Breast epithelium (tissue), 4 donors: ENCODE measurements at regions of chr6 and their contacts with region 1.

Region 1: DNA sequence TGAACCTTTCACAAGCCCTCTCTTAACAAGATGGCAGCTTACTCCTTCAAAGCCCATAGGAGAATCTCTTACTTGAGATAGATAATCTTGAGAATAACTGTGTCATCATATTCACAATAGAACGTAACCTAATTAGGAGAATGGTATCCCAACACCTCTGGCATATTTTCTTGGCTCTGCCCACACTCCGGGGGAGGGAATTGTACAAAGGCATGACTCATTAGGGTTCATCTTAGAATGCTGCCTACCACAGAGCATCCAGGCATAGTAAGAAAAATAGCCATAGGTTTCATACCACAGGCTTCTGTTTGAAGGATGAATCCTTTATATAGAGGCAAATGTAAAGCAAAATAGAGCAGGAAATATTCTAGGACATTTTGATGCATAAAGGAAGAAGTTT is 1100.6 kb upstream of the CITED2 start:
- DNase-seq: peak in 1 of 2 donors; percentile 51
- H3K4me3 ChIP-seq: no peak overlapping the region
- H3K27ac ChIP-seq: no peak overlapping the region
- H3K4me1 ChIP-seq: no peaks in the 10 kb centered on the region
- H3K27me3 ChIP-seq: no peaks in the 10 kb centered on the region
- CTCF ChIP-seq: no peak
- POLR2A ChIP-seq: no peak

Region 2: DNA sequence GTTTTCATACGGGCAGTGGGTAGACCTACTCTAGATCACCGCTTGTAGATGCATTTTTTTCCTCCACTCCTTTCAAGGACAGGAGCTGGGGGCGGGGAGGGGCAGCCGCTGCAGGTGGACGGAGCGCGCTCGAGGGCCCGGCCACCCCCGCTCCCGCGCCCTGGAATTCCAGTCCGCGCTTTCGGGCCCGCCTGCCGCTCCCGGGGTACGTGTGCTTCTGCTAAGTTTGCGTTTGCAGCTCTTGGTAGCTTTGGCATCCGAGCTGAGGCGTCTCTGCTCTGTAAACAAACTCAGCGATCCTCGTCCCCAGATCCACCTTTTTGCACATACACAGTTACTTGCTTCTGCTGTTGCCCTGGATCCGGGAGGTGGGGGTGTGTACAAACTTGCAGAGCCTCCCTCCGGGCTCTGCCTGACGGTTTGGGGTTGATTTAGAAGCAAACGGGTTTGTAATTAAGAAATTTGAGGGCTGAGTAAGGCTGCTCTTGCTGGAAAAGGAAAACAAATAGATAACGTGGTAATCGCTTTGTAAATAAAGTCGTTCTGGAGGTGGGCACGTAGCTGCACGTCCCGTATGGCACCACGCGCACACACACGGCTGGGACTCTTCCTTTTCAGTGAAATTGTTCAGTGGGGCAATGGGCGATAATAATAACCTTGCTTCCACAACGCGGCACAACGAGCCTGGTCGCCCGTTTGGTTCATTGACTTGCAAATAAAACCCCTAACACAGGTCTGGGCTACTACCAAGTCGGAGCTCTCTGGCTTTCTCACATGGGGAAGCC is 1099.7 kb before region 1 on chr6:
- intact Hi-C with region 1: loop called (anchors 10 kb)
- DNase-seq: peak; percentile 90 to 94
- H3K4me3 ChIP-seq: peak overlapping the region; percentile 93 to 95 (median 93)
- H3K27ac ChIP-seq: peak overlapping the region; percentile 96 to 97
- H3K4me1 ChIP-seq: no peaks in the 10 kb centered on the region
- H3K27me3 ChIP-seq: no peaks in the 10 kb centered on the region
- CTCF ChIP-seq: no peak
- POLR2A ChIP-seq: peak; percentile 57

Region 3: GRCh38 chr6:140809694-140810101 is 334.6 kb after region 1 on chr6:
- intact Hi-C with region 1: no loop called
- DNase-seq: no peak
- H3K4me3 ChIP-seq: no peak overlapping the region
- H3K27ac ChIP-seq: no peak overlapping the region
- H3K4me1 ChIP-seq: no peaks in the 10 kb centered on the region
- H3K27me3 ChIP-seq: no peaks in the 10 kb centered on the region
- CTCF ChIP-seq: no peak
- POLR2A ChIP-seq: no peak